ENCODE measurements at regions of chr7 and their contacts with region 1.

Region 1: GRCh38 chr7:130146693-130147405 is 58.4 kb downstream of the TMEM209 start:
- DNase-seq: no peak
- ATAC-seq: no peak
- H3K4me3 ChIP-seq: no peak overlapping the region
- H3K27ac ChIP-seq: no peak overlapping the region
- H3K4me1 ChIP-seq: no peaks in the 10 kb centered on the region
- H3K27me3 ChIP-seq: no peaks in the 10 kb centered on the region
- CTCF ChIP-seq: no peak

Region 2: DNA sequence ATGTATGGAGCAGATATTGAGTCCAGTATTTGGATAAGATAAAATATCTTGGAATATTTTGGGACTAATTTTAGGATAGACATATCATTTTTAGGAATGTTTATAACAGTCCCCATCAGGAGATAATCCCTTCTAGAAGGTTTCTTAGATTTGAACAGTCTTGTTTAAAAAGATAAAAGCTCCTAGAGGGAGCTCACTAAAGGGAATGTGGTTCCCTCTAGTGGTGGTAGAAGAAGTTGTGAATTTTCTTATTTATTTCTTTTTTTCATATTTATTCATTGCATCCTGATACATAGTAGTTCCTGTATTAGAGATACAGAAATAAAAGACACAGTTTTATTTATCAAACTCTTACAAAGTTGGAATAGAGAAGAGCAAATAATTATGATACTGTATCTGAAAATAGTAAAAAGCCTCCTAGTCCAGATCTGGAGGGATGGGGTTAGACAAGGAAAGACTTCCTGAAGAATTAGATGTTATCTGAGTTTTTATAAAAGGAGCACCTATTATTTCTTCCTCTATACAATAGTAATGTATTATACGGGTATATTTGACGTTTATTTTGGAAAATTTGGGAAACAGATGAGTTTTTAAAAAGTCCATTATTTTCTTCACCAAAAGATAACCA is 611.7 kb after region 1 on chr7:
- CTCF ChIA-PET with region 1: no interaction called
- POLR2A ChIA-PET with region 1: interaction called, 10 read pairs
- in situ Hi-C with region 1: no loop called
- intact Hi-C with region 1: no loop called
- DNase-seq: peak; percentile 33
- ATAC-seq: peak; percentile 56; the same call in 1 of the 2 replicates
- H3K4me3 ChIP-seq: no peak overlapping the region
- H3K27ac ChIP-seq: no peak overlapping the region
- H3K4me1 ChIP-seq: no peaks in the 10 kb centered on the region
- H3K27me3 ChIP-seq: no peaks in the 10 kb centered on the region
- CTCF ChIP-seq: peak; percentile 76; the same call in 1 of the 2 replicates